Calu3 (cell line): ENCODE measurements at regions of chr15 and their contacts with region 1.

Region 1: GRCh38 chr15:95025924-95026728 is 794.8 kb downstream of the MCTP2 start:
- DNase-seq: peak; percentile 78
- H3K4me3 Mint-ChIP-seq: no peak overlapping the region
- H3K27ac Mint-ChIP-seq: no peak overlapping the region
- H3K4me1 Mint-ChIP-seq: peaks cover 7% of the 10 kb centered on the region
- H3K27me3 Mint-ChIP-seq: no peaks in the 10 kb centered on the region
- CTCF ChIP-seq: peak; percentile 75

Region 2: GRCh38 chr15:94761574-94761973 is 264.6 kb before region 1 on chr15:
- CTCF ChIA-PET with region 1: no interaction called
- intact Hi-C with region 1: no loop called
- DNase-seq: no peak
- H3K4me3 Mint-ChIP-seq: no peak overlapping the region
- H3K27ac Mint-ChIP-seq: no peak overlapping the region
- H3K4me1 Mint-ChIP-seq: no peaks in the 10 kb centered on the region
- H3K27me3 Mint-ChIP-seq: no peaks in the 10 kb centered on the region
- CTCF ChIP-seq: no peak

Region 3: GRCh38 chr15:94924971-94925598 is 101.0 kb before region 1 on chr15:
- CTCF ChIA-PET with region 1: no interaction called
- intact Hi-C with region 1: no loop called
- DNase-seq: no peak
- H3K4me3 Mint-ChIP-seq: no peak overlapping the region
- H3K27ac Mint-ChIP-seq: no peak overlapping the region
- H3K4me1 Mint-ChIP-seq: no peaks in the 10 kb centered on the region
- H3K27me3 Mint-ChIP-seq: no peaks in the 10 kb centered on the region
- CTCF ChIP-seq: no peak

Region 4: GRCh38 chr15:95252404-95252803 is 226.3 kb after region 1 on chr15:
- CTCF ChIA-PET with region 1: interaction called, 3 read pairs
- intact Hi-C with region 1: loop called (anchors 2 kb)
- DNase-seq: no peak
- H3K4me3 Mint-ChIP-seq: no peak overlapping the region
- H3K27ac Mint-ChIP-seq: peak overlapping the region; percentile 19
- H3K4me1 Mint-ChIP-seq: peaks cover 61% of the 10 kb centered on the region
- H3K27me3 Mint-ChIP-seq: no peaks in the 10 kb centered on the region
- CTCF ChIP-seq: no peak

Region 5: DNA sequence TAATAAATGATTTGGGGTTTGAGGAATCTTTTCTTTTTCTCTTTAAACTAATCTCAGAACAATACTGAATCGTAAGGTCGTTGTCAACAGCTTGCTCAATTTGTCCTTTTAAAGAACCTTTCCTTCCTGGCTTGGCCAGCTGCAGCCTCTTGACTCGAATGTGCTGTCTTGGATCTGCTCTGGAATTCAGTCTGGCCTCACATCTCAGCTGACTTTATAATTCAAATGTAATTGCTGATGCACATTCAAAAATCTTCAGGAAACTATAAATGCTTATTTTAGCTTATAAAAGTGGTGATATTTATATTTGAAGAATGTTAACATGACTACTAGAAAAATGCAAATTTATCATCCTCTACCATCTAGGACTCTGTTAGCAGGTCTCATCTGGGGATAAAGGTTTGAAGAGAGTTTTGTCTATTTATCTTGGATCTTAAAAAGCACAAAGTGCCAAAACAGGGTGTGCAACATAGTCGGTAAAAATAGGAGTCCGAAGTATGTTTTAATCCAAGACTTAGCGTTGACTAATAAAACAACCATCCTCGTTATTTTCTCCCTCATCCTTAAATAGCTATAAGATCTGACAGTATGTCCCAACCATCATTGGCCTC is 240.4 kb after region 1 on chr15:
- CTCF ChIA-PET with region 1: no interaction called
- intact Hi-C with region 1: no loop called
- DNase-seq: no peak
- H3K4me3 Mint-ChIP-seq: no peak overlapping the region
- H3K27ac Mint-ChIP-seq: no peak overlapping the region
- H3K4me1 Mint-ChIP-seq: peaks cover 11% of the 10 kb centered on the region
- H3K27me3 Mint-ChIP-seq: no peaks in the 10 kb centered on the region
- CTCF ChIP-seq: no peak